ENCODE measurements at regions of chrX and their contacts with region 1.

Region 1: DNA sequence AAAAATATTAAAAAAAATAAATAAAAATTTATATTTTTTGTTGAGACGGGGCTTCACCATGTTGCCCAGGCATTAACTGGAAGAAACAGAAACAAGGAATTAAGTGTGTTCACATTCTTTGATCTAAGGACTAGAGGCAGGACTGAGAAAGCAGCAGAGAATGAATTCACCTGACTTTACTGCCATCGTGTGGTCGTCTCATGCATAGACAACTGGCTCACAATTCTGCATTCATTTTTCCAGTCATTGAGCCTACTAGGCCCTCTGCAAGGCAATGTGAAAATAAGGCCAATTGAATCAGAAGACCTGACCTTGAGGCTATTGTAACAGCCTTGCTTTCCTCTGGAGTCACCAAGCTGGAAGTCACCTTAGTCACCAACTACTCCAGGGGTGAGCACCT is 37.4 kb downstream of the LHFPL1 start:
- DNase-seq: no peak
- H3K4me3 Mint-ChIP-seq: no peak overlapping the region
- H3K27ac Mint-ChIP-seq: no peak overlapping the region
- H3K4me1 Mint-ChIP-seq: peaks cover 6% of the 10 kb centered on the region
- H3K27me3 Mint-ChIP-seq: no peaks in the 10 kb centered on the region

Region 2: DNA sequence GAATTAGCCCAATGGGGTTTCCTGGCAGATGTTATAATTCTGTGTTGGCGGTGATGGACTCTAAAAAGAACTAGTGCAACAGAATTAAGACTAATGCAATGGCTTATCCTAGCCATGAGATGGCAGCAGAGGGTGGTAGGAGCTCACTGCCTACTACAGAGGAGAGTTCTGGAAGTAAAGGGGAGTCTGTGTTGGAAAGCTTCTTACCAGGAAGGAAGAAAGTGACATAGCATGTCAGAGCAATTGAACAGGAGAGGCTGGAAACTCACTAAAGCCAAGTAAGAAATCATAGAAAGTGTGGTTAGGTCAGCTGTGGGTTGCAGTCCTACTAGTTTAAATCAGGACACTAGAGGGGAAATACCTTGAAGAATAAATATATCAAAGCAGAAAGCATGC is 772.7 kb before region 1 on chrX:
- intact Hi-C with region 1: loop called (anchors 5 kb)
- DNase-seq: no peak
- H3K4me3 Mint-ChIP-seq: no peak overlapping the region
- H3K27ac Mint-ChIP-seq: no peak overlapping the region
- H3K4me1 Mint-ChIP-seq: no peaks in the 10 kb centered on the region
- H3K27me3 Mint-ChIP-seq: peaks cover 4% of the 10 kb centered on the region

Region 3: GRCh38 chrX:112678831-112679230 is 36.5 kb after region 1 on chrX:
- intact Hi-C with region 1: loop called (anchors 2 kb)
- DNase-seq: no peak
- H3K4me3 Mint-ChIP-seq: peak overlapping the region; percentile 66
- H3K27ac Mint-ChIP-seq: peak overlapping the region; percentile 55
- H3K4me1 Mint-ChIP-seq: peaks cover 29% of the 10 kb centered on the region
- H3K27me3 Mint-ChIP-seq: no peaks in the 10 kb centered on the region

Region 4: GRCh38 chrX:112851806-112852205 is 209.5 kb after region 1 on chrX:
- intact Hi-C with region 1: loop called (anchors 10 kb)
- DNase-seq: no peak
- H3K4me3 Mint-ChIP-seq: no peak overlapping the region
- H3K27ac Mint-ChIP-seq: no peak overlapping the region
- H3K4me1 Mint-ChIP-seq: peaks cover 30% of the 10 kb centered on the region
- H3K27me3 Mint-ChIP-seq: peaks cover 2% of the 10 kb centered on the region